Activated CD4-positive, alpha-beta T cell treated with anti-CD3 and anti-CD28 coated beads, Interleukin-2, amount 10 ng/mL, durations not matched to agents 24 days and 14 days (primary cell): ENCODE measurements at regions of chr9 and their contacts with region 1.

Region 1: DNA sequence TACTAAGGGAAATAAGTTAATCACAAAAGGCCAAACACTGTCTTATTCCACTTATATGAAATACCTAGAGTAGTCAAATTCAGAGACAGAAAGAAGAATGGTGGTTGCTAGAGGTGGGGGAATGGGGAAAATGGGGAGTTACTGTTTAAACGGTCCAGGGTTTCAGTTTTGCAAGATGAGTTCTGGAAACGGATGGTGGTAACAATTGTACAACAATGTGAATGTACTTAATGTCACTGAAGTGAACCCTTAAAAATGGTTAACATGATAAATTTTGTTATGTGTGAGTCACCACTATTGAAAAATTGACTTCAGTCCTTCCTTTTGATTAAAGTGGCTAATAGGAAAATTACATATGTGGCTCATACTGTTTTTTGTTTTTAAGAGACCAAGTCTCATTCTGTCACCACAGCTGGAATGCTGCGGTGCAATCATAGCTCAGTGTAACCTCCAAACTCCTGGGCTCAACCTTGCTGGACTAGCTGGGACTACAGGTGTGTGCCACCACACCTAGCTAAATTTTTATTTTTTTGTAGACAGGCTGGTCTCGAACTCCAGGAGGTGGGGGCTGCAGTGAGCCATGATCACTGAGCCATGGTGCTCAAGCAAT is 8.7 kb downstream of the UBQLN1 start:
- DNase-seq: no peak
- H3K4me3 Mint-ChIP-seq: no peak overlapping the region
- H3K27ac Mint-ChIP-seq: peak overlapping the region; percentile 62
- H3K4me1 Mint-ChIP-seq: peaks cover 28% of the 10 kb centered on the region
- H3K27me3 Mint-ChIP-seq: no peaks in the 10 kb centered on the region

Region 2: GRCh38 chr9:83688921-83689320 is 10.2 kb before region 1 on chr9:
- intact Hi-C with region 1: loop called (anchors 1 kb)
- DNase-seq: no peak
- H3K4me3 Mint-ChIP-seq: no peak overlapping the region
- H3K27ac Mint-ChIP-seq: peak overlapping the region; percentile 28
- H3K4me1 Mint-ChIP-seq: peaks cover 46% of the 10 kb centered on the region
- H3K27me3 Mint-ChIP-seq: no peaks in the 10 kb centered on the region